Colonic mucosa (tissue), 4 donors: ENCODE measurements at regions of chr14 and their contacts with region 1.

Region 1: GRCh38 chr14:92590176-92590575 is 76.6 kb downstream of the RIN3 start:
- DNase-seq: no peak
- H3K4me3 ChIP-seq: no peak overlapping the region
- H3K27ac ChIP-seq: no peak overlapping the region
- H3K4me1 ChIP-seq: no peaks in the 10 kb centered on the region
- H3K27me3 ChIP-seq: no peaks in the 10 kb centered on the region
- CTCF ChIP-seq: no peak

Region 2: GRCh38 chr14:92680781-92681650 is 90.8 kb after region 1 on chr14:
- intact Hi-C with region 1: loop called (anchors 2 kb)
- DNase-seq: peak; percentile 83
- H3K4me3 ChIP-seq: no peak overlapping the region
- H3K27ac ChIP-seq: no peak overlapping the region
- H3K4me1 ChIP-seq: no peaks in the 10 kb centered on the region
- H3K27me3 ChIP-seq: no peaks in the 10 kb centered on the region
- CTCF ChIP-seq: peak; percentile 97